ENCODE measurements at regions of chr17 and their contacts with region 1.

Region 1: DNA sequence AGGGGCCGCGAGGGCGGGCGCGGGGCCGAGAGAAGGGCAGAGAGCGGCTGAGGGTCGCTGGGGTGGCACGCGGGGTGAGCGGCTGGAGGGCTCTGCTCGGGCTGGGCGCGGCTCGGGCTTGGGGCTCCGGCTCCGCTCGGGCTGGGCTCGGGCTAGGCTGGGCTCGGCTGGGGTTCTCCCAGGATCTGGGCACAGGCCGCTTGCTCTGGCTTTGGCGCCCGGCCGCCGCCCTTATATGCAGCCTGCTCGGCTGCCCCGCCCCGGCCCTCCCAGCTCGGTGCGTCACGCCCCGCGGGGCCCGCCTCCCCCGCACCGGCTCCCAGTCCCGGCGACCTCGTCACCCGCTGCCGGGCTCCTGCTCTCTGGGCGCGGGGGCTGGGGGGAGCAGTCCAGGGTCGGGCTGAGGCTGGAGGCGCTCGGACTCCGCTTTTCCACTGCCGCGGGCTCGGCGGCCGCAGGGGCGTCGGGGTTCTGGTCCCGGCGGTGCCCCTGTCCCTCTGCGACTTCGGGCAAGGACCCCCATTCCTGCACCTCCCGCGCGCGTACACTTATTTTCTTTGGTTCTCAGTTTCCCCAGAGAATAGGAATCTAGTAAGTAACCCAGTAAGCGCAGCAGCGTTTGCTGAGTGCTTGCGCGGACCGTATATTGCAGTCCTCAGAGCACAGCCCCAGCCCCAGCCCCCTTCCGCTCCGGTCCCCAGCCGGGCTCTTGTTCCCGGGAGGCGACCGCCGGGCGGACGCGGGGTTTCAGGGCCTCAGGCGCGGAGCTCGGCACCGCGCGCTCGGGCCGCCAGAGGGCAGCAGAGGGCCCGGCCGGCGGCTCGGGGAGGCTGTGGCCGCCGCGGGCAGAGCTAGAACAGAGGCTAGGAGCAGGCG is at the start of gene RASD1:
- DNase-seq: peak; percentile 56 to 90 (median 72)
- ATAC-seq: peak; percentile 85
- H3K4me3 ChIP-seq: peak within 1 kb of the TSS; percentile 65
- H3K4me3 Mint-ChIP-seq: peak within 1 kb of the TSS; percentile 82
- H3K27ac ChIP-seq: no peak within 1 kb of the TSS
- H3K27ac Mint-ChIP-seq: no peak within 1 kb of the TSS
- H3K4me1 ChIP-seq: peaks cover 24% of the 10 kb centered on the region
- H3K4me1 Mint-ChIP-seq: peaks cover 7% of the 10 kb centered on the region
- H3K27me3 ChIP-seq: peaks cover 8 to 11% of the 10 kb centered on the region in 2 experiments
- H3K27me3 Mint-ChIP-seq: peaks cover 10% of the 10 kb centered on the region
- CTCF ChIP-seq: peak; percentile 92
- total RNA-seq, gene RASD1: 1.8 to 2.0 TPM

Region 2: GRCh38 chr17:17476865-17477467 is 19.5 kb before region 1 on chr17 and contains the start of gene MED9:
- CTCF ChIA-PET with region 1: interaction called, 7 read pairs
- POLR2A ChIA-PET with region 1: interaction called, 3 read pairs
- intact Hi-C with region 1: loop called in 1 of 2 experiments (anchors 1 kb)
- DNase-seq: peak; percentile 92 to 98 (median 94)
- ATAC-seq: peak; percentile 98
- H3K4me3 ChIP-seq: peak within 1 kb of the TSS; percentile 82
- H3K4me3 Mint-ChIP-seq: peak within 1 kb of the TSS; percentile 91
- H3K27ac ChIP-seq: peak within 1 kb of the TSS; percentile 42 to 58
- H3K27ac Mint-ChIP-seq: peak within 1 kb of the TSS; percentile 87
- H3K4me1 ChIP-seq: peaks cover 42% of the 10 kb centered on the region
- H3K4me1 Mint-ChIP-seq: peaks cover 51% of the 10 kb centered on the region
- H3K27me3 ChIP-seq: peaks cover 0 to 2% of the 10 kb centered on the region in 2 experiments
- H3K27me3 Mint-ChIP-seq: peaks cover 6% of the 10 kb centered on the region
- CTCF ChIP-seq: no peak
- total RNA-seq, gene MED9: 27.0 to 27.9 TPM

Region 3: GRCh38 chr17:17557796-17558195 is 61.4 kb after region 1 on chr17:
- CTCF ChIA-PET with region 1: no interaction called
- POLR2A ChIA-PET with region 1: no interaction called
- intact Hi-C with region 1: no loop called
- DNase-seq: no peak
- ATAC-seq: no peak
- H3K4me3 ChIP-seq: no peak overlapping the region
- H3K4me3 Mint-ChIP-seq: no peak overlapping the region
- H3K27ac ChIP-seq: no peak overlapping the region
- H3K27ac Mint-ChIP-seq: no peak overlapping the region
- H3K4me1 ChIP-seq: no peaks in the 10 kb centered on the region
- H3K4me1 Mint-ChIP-seq: no peaks in the 10 kb centered on the region
- H3K27me3 ChIP-seq: no peaks in the 10 kb centered on the region
- H3K27me3 Mint-ChIP-seq: no peaks in the 10 kb centered on the region
- CTCF ChIP-seq: no peak

Region 4: GRCh38 chr17:17568749-17569195 is 72.3 kb after region 1 on chr17:
- CTCF ChIA-PET with region 1: interaction called, 7 read pairs
- POLR2A ChIA-PET with region 1: no interaction called
- intact Hi-C with region 1: loop called in 1 of 2 experiments (anchors 5 kb)
- DNase-seq: peak; percentile 16 to 64 (median 38)
- ATAC-seq: no peak
- H3K4me3 ChIP-seq: no peak overlapping the region
- H3K4me3 Mint-ChIP-seq: no peak overlapping the region
- H3K27ac ChIP-seq: no peak overlapping the region
- H3K27ac Mint-ChIP-seq: no peak overlapping the region
- H3K4me1 ChIP-seq: no peaks in the 10 kb centered on the region
- H3K4me1 Mint-ChIP-seq: no peaks in the 10 kb centered on the region
- H3K27me3 ChIP-seq: no peaks in the 10 kb centered on the region
- H3K27me3 Mint-ChIP-seq: no peaks in the 10 kb centered on the region
- CTCF ChIP-seq: no peak

Region 5: DNA sequence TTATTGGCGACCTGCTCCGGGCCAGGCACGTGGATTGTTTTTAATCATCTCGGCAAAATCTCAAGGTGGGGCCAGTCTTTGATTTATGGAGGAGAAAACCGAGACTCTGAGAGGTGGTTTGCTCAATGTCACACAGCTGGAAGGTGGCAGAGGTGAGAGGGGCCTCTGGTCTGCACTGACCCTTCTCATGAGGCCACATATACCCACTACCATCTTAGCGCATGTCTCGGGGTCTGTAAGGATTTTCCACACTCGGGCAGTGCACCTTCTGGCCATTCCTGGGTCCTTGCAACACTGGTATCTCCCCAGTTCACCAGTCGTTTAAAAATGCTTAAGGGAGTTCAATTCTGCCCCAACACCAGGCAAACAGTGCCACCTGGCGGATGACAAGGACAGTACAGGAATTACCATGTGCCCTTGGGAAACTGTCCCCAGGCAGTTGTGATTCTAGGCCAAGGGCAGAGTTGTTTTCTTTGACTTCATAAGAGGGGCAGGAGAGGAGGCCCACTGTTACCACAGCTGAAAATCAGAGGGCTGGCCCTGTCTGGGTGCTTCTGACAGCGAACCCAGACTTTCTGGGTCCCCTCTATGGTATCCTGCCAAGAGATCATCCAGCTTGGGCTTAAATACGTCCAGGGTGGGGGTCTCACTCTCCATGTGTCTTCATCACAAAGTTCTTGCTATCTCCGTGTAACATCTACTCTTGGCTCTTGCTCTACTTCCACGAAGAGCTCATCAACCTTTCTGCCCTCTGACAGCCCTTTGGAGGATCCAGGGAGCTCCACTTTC is 145.4 kb after region 1 on chr17:
- CTCF ChIA-PET with region 1: interaction called, 28 read pairs
- POLR2A ChIA-PET with region 1: interaction called, 5 read pairs
- intact Hi-C with region 1: loop called (anchors 1 kb)
- DNase-seq: peak; percentile 65 to 90 (median 78)
- ATAC-seq: peak; percentile 89
- H3K4me3 ChIP-seq: no peak overlapping the region
- H3K4me3 Mint-ChIP-seq: no peak overlapping the region
- H3K27ac ChIP-seq: no peak overlapping the region
- H3K27ac Mint-ChIP-seq: no peak overlapping the region
- H3K4me1 ChIP-seq: peaks cover 4% of the 10 kb centered on the region
- H3K4me1 Mint-ChIP-seq: no peaks in the 10 kb centered on the region
- H3K27me3 ChIP-seq: no peaks in the 10 kb centered on the region
- H3K27me3 Mint-ChIP-seq: peaks cover 8% of the 10 kb centered on the region
- CTCF ChIP-seq: peak; percentile 92

Region 6: DNA sequence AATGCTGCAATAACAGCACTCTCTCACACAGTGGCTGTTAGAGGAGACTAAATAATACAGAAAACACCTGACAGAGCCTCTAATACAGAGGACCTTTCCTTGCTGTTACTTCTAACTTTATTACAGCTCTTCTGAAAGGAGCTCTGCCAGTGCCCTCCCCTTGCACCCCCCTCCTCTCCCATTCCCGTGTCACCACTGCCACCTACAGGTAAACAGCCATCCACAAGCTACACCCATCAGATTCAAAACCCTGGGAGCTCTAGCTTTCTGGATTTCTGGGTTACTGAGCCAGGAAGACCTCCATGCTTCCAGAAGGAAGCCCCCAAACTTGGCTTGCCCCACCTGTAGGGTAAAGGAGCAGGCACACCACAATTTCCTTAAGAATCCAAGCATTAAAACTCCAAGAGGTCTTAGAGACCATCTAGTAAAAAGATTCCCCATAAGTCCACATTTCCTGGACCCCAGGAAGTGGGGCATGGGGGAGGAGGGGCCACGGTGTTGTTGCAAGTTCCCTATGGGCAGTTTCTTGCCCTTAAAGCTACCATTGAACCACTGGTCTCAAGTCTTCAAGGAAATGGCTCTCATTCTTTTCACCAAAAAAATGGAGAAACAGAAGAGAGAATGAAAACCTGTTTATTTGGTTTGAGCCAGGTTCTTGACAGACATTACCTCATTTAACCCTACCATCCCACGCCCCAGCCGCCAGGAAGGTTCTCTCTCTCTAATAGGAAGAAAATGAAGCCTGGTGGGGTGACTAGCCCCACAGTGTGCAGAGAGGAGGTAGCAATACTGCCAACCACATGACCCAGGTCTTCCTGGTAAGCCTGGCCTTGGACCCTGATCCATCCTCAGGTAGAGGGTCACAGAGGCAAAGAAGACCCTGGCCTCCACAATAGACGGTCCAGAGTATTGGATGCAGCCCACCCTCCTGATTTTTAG is 423.0 kb after region 1 on chr17:
- CTCF ChIA-PET with region 1: interaction called, 3 read pairs
- POLR2A ChIA-PET with region 1: no interaction called
- intact Hi-C with region 1: loop called in 1 of 2 experiments (anchors 2 kb)
- DNase-seq: peak; percentile 44 to 81 (median 64)
- ATAC-seq: peak; percentile 99
- H3K4me3 ChIP-seq: no peak overlapping the region
- H3K4me3 Mint-ChIP-seq: no peak overlapping the region
- H3K27ac ChIP-seq: no peak overlapping the region
- H3K27ac Mint-ChIP-seq: no peak overlapping the region
- H3K4me1 ChIP-seq: peaks cover 9% of the 10 kb centered on the region
- H3K4me1 Mint-ChIP-seq: peaks cover 19% of the 10 kb centered on the region
- H3K27me3 ChIP-seq: no peaks in the 10 kb centered on the region
- H3K27me3 Mint-ChIP-seq: no peaks in the 10 kb centered on the region
- CTCF ChIP-seq: peak; percentile 59

Measured in CD4-positive, alpha-beta T cell (primary cell).